Activated naive CD4-positive, alpha-beta T cell treated with anti-CD3 and anti-CD28 coated beads for 36 hours (primary cell): ENCODE measurements at regions of chr1 and their contacts with region 1.

Region 1: GRCh38 chr1:154272217-154272998 is at the start of gene HAX1:
- DNase-seq: peak; percentile 99
- H3K4me3 Mint-ChIP-seq: peak within 1 kb of the TSS; percentile 98
- H3K27ac Mint-ChIP-seq: peak within 1 kb of the TSS; percentile 99
- H3K4me1 Mint-ChIP-seq: peaks cover 40% of the 10 kb centered on the region
- H3K27me3 Mint-ChIP-seq: no peaks in the 10 kb centered on the region
- total RNA-seq, gene HAX1: 204 to 219 TPM

Region 2: GRCh38 chr1:153796791-153797659 is 475.4 kb before region 1 on chr1:
- CTCF ChIA-PET with region 1: interaction called, 3 read pairs
- intact Hi-C with region 1: loop called (anchors 2 kb)
- DNase-seq: peak; percentile 95
- H3K4me3 Mint-ChIP-seq: no peak overlapping the region
- H3K27ac Mint-ChIP-seq: no peak overlapping the region
- H3K4me1 Mint-ChIP-seq: peaks cover 2% of the 10 kb centered on the region
- H3K27me3 Mint-ChIP-seq: no peaks in the 10 kb centered on the region

Region 3: GRCh38 chr1:154157520-154158306 is 114.7 kb before region 1 on chr1:
- CTCF ChIA-PET with region 1: interaction called, 6 read pairs
- intact Hi-C with region 1: loop called (anchors 1 kb)
- DNase-seq: peak; percentile 87
- H3K4me3 Mint-ChIP-seq: peak overlapping the region; percentile 48
- H3K27ac Mint-ChIP-seq: peak overlapping the region; percentile 96
- H3K4me1 Mint-ChIP-seq: peaks cover 70% of the 10 kb centered on the region
- H3K27me3 Mint-ChIP-seq: no peaks in the 10 kb centered on the region

Region 4: DNA sequence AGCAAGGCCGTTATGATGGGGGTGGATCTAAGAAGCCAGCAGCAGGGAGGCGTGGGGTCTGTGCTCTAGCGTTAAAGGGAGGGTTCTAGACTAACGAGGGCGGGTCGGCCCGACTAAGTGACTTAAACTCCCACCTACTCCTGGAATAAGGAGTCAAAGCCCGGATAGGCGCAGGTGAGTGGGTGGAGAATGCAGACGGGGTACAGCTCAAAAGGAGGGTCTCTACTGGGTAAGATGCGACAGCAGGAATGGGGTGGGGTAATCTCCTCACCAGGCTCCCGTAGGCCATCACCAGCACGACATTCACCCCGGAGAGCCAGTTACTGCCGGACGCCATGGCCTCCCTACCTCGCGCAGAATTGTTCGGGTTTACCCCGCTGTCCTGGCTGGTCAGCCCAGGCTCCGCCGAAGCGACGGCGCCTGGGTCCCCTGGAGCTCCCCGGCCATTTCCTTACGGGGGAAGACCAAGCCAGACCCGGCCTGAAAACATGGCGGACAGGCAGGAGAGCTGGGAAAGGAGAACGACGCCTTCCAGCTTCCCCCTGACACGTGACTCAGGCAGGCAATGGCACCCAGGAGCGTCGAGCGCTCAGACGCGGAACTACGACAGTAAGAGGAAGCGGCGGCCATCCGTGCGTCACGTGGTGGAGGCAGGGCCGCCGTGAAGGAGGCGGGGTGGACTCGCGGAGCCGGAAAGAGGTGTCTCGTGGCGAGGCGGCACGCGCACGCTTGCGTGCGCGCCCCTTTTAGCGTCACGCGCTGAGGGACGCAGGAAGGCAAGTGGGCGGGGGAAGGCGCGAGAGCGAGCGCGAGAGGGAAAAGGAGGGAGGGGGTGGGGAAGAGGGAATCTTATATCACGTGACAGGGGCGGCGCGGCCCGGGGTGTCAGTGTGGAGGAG is 52.1 kb before region 1 on chr1 and contains the start of gene UBAP2L:
- CTCF ChIA-PET with region 1: interaction called, 3 read pairs
- intact Hi-C with region 1: loop called (anchors 1 kb)
- DNase-seq: peak; percentile 99
- H3K4me3 Mint-ChIP-seq: peak within 1 kb of the TSS; percentile 96
- H3K27ac Mint-ChIP-seq: peak within 1 kb of the TSS; percentile 98
- H3K4me1 Mint-ChIP-seq: peaks cover 72% of the 10 kb centered on the region
- H3K27me3 Mint-ChIP-seq: no peaks in the 10 kb centered on the region
- total RNA-seq, gene UBAP2L: 154 to 164 TPM

Region 5: DNA sequence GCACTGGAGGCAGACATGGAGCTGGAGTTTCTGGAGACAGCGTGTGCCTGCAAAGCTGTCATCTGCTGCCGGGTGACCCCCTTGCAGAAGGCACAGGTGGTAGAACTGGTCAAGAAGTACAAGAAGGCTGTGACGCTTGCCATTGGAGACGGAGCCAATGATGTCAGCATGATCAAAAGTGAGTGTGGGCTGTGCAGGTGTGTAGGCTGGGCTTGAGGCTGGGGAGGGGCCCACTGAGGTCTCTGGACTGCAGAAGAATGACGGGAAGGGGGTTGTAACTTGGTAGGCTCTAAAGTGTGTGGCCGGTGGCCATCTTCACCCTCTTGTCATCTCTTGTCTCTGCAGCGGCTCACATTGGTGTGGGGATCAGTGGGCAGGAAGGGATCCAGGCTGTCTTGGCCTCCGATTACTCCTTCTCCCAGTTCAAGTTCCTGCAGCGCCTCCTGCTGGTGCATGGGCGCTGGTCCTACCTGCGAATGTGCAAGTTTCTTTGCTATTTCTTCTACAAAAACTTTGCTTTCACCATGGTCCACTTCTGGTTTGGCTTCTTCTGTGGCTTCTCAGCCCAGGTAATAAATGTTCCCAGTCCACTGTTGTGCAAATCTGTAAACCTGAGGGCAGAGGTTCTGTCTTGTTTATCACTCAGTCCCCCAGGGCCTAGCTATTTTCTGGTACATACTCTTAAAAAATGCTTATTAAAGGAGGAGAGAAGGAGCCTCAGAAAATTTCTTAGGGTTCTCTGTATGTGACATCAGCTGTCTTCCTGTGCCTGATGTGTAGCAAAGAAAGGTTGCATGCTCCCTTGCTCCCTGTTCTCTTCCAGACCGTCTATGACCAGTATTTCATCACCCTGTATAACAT is 72.8 kb after region 1 on chr1:
- CTCF ChIA-PET with region 1: no interaction called
- intact Hi-C with region 1: loop called (anchors 2 kb)
- DNase-seq: peak; percentile 86
- H3K4me3 Mint-ChIP-seq: peak overlapping the region; percentile 33
- H3K27ac Mint-ChIP-seq: peak overlapping the region; percentile 68
- H3K4me1 Mint-ChIP-seq: peaks cover 72% of the 10 kb centered on the region
- H3K27me3 Mint-ChIP-seq: no peaks in the 10 kb centered on the region